Panc1 (cell line): ENCODE measurements at regions of chr19 and their contacts with region 1.

Region 1: GRCh38 chr19:51016798-51017683 is 2.5 kb downstream of the KLK10 start:
- DNase-seq: no peak
- ATAC-seq: peak; percentile 85
- H3K4me3 ChIP-seq: peak overlapping the region; percentile 33 to 53
- H3K27ac ChIP-seq: no peak overlapping the region
- H3K4me1 ChIP-seq: peaks cover 3% of the 10 kb centered on the region
- H3K27me3 ChIP-seq: peaks cover 2% of the 10 kb centered on the region; the same call in 1 of the 2 replicates
- CTCF ChIP-seq: peak; percentile 89

Region 2: DNA sequence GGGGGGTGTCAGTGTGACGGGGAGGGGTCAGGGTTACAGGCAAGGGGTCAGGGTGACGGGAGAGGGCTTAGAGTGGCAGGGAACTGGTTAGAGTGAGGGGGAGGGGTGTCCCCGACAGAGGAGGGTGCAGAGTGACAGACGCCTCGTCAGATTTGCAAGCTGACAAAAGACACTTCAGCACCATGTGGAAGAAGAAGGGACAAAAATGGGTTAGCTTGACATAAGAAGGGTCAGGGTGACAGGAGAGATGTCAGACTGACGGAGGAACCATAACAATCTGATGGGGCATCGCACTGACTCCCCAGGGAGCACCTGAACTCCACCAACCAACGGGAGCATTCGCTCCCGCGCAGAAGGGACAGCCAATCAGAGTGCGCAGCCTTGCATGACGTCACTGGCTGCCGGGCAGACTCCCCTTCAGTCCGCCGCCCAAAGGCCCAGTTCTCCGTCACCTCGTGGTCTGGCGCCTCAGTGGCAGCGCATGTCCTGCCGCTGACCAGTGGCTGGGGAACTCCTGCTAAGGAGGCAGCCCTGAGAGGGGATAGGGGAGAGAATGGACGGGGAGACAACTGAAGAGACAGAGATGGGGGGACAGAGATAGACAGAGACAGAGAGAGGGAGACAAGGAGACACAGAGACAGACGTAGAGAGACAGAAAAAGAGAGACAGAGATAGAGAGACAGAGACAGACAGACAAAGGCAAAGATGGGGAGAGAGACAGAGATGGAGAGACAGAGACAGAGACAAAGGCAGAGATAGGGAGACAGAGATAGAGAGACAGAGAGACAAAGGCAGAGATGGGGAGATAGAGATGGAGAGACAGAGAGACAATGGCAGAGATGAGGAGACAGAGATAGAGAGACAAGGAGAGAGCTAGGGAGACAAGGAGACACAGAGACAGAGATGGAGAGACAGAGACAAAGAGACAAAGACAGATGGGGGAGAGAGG is 337.6 kb before region 1 on chr19:
- CTCF ChIA-PET with region 1: interaction called, 10 read pairs
- POLR2A ChIA-PET with region 1: no interaction called
- in situ Hi-C with region 1: no loop called
- intact Hi-C with region 1: no loop called
- DNase-seq: no peak
- ATAC-seq: peak; percentile 99
- H3K4me3 ChIP-seq: no peak overlapping the region
- H3K27ac ChIP-seq: no peak overlapping the region
- H3K4me1 ChIP-seq: no peaks in the 10 kb centered on the region
- H3K27me3 ChIP-seq: peaks cover 2% of the 10 kb centered on the region; the same call in 1 of the 2 replicates
- CTCF ChIP-seq: no peak

Region 3: GRCh38 chr19:50928741-50929230 is 88.3 kb before region 1 on chr19:
- CTCF ChIA-PET with region 1: interaction called, 15 read pairs
- POLR2A ChIA-PET with region 1: interaction called, 7 read pairs
- in situ Hi-C with region 1: no loop called
- intact Hi-C with region 1: loop called (anchors 2 kb)
- DNase-seq: no peak
- ATAC-seq: no peak
- H3K4me3 ChIP-seq: no peak overlapping the region
- H3K27ac ChIP-seq: no peak overlapping the region
- H3K4me1 ChIP-seq: no peaks in the 10 kb centered on the region; the same call in 1 of the 2 replicates
- H3K27me3 ChIP-seq: 0 out of 2 replicates have a peak, but pooled peaks cover 2% of the 10 kb centered on the region
- CTCF ChIP-seq: no peak

Region 4: DNA sequence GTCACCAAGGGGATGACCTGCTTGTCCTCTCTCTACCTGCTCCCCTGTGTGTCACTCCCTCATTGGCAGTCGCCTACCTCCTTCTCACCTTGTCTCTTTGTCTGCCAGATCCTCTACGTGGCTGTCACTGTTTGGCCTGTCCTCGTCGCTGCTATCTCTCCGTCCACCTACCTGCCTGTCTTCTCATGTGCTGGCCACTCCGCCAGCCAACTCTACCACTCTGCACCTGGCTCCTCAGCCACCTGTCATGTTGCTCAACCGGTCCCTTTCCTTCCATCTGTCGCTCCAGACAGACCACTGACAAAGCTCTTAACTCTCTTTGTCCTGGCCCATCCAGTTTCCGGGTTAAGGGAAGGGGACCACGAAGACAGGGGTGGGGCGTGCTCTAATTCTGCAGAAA is 17.7 kb after region 1 on chr19 and contains the start of gene KLK12:
- CTCF ChIA-PET with region 1: no interaction called
- POLR2A ChIA-PET with region 1: interaction called, 11 read pairs
- in situ Hi-C with region 1: no loop called
- intact Hi-C with region 1: no loop called
- DNase-seq: no peak
- ATAC-seq: no peak
- H3K4me3 ChIP-seq: no peak within 1 kb of the TSS
- H3K27ac ChIP-seq: no peak within 1 kb of the TSS
- H3K4me1 ChIP-seq: no peaks in the 10 kb centered on the region
- H3K27me3 ChIP-seq: no peaks in the 10 kb centered on the region
- CTCF ChIP-seq: no peak
- total RNA-seq, gene KLK12: not detected

Region 5: GRCh38 chr19:51097166-51097738 is 80.2 kb after region 1 on chr19:
- CTCF ChIA-PET with region 1: interaction called, 13 read pairs
- POLR2A ChIA-PET with region 1: no interaction called
- in situ Hi-C with region 1: no loop called
- intact Hi-C with region 1: loop called (anchors 2 kb)
- DNase-seq: no peak
- ATAC-seq: peak; percentile 77; the same call in 1 of the 2 replicates
- H3K4me3 ChIP-seq: no peak overlapping the region
- H3K27ac ChIP-seq: no peak overlapping the region
- H3K4me1 ChIP-seq: no peaks in the 10 kb centered on the region; the same call in 1 of the 2 replicates
- H3K27me3 ChIP-seq: no peaks in the 10 kb centered on the region
- CTCF ChIP-seq: peak; percentile 77